ENCODE measurements at regions of chr20 and their contacts with region 1.

Region 1: DNA sequence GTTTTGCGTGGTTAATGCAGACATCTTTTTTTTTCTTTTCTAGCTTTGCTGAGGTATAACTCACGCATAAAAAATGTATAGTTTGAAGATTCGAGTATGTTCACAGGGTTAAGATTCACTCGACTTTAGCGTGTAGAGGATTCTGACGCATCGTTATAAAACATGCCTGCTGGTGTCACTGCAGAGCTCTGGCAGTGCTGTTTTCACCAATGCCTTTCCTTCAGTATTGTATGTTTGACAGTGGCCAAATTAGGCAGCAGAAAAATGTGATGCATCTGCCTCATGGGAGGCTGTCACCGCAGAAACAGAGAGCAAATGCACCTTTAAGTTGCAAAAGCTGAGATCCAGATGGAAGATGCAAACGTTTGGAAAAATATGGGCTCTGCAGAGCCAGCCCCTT is 18.0 kb upstream of the SIRPB2 start:
- DNase-seq: peak; percentile 19
- CTCF ChIP-seq: peak; percentile 44

Region 2: DNA sequence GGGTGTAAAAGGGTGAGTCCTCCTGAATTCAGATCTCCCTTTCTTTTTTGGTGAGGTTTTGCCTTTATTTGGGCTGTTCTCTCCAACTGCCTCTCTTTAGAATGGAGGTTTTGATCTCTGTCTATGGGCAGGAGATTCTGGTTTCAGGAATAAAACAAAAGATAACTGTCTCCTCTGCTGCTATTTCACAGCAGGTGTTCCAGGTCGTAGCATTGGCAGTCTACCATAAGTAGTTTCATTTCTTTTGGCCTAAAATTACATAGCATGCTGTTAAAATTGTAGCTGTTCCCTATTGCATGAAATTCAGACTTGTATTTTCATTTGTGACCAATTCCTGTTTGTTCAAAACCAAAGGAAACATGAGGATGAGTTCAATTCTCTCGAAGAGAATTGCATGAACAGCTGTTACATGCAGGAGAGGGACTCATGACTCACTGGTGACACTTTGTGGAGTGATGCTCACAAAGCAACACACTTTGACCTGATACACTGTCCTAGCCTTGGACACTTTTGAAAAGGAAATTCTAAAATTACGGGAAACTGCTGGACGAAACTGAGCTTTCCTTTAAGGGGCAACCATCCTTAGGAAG is 225.1 kb after region 1 on chr20:
- CTCF ChIA-PET with region 1: interaction called, 17 read pairs
- POLR2A ChIA-PET with region 1: no interaction called
- DNase-seq: peak; percentile 34
- CTCF ChIP-seq: peak; percentile 76

Measured in GM10248 (cell line).